Sciatic nerve (tissue), 2 donors: ENCODE measurements at regions of chr4 and their contacts with region 1.

Region 1: DNA sequence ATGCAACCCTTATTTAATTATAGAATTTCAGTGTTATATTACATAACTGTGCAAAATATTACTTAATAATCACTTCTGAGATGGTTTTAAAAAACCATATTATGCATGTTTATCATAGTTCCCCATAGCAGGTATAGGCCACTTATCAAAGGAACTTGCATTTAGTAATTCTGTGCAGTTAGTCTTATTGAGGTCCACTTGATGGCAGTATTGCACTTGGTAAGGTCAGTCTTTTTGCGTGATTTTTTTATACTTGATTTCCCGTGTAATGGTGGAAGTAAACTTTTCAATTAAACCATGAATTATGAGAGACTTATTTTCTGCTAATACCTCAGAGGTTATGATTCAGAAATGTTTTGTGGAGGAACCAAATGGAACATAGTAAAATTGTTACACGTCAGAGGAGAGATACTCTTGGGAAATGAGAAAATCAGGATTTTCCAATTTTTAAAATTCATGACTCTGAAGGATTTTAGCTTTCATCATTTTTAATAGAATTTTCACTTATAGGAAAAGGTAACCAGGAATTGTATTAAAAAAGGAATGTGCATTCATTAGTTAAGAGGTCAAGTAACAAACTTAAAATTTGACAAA is 230.0 kb downstream of the CCSER1 start:
- DNase-seq: no peak
- ATAC-seq: no peak

Region 2: DNA sequence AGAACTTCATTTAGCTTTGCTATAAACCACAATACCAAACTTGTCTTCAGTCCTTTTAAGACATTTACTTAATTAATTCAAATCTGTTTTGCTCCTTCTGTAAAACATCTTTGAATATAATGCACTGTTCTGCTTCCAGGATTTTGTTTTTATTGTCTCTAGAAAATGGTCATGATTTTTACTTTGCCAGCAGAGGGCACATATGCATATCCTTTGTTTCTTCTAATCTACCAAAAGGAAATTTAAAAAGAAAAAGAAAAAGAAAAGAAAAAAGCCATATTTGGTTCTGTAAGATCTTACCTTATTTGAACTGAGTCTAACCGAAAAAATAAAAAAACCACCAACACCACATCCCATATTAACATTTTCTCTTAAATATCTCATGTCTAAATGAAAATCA is 332.0 kb before region 1 on chr4:
- intact Hi-C with region 1: no loop called
- DNase-seq: no peak
- ATAC-seq: no peak

Region 3: DNA sequence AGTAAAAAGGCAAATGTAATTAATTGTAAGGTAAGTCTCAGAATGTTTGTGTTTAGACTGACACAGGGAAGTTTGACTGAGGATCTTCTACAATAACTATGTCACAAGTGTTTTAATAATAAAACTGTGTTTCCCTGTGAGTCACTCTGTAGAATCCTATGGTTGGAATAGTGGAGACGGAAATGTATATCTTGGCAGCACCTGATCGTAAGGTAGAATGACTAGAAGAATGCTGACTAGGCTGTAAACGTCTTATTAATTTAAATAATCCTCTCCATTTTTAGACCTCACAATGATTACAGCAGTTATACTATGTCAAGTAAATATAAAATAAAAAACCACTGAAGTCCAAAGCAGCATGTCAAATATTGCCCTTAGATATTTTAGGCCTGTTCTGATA is 36.0 kb after region 1 on chr4:
- intact Hi-C with region 1: loop called (anchors 2 kb)
- DNase-seq: no peak
- ATAC-seq: no peak

Region 4: DNA sequence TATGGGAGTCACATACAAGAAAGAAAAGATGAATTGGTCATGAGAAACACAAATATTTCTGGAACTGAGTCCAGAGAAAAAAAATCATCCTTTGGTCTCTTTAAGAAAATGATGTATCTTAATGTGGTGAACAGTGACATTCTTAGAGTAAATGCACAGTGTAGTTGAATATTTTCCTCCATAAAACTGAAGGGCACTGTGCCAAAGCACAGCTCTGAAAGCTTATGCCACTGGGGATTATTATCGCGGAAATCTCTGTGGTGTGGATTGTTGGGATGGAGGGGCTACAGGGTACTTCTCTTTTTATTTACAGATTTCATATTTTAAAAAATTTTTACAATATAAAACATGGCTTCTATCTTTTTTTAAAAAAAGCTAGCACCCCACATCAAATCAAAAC is 678.1 kb after region 1 on chr4:
- intact Hi-C with region 1: no loop called
- DNase-seq: no peak
- ATAC-seq: no peak